OCI-LY7 (cell line): ENCODE measurements at regions of chr2 and their contacts with region 1.

Region 1: DNA sequence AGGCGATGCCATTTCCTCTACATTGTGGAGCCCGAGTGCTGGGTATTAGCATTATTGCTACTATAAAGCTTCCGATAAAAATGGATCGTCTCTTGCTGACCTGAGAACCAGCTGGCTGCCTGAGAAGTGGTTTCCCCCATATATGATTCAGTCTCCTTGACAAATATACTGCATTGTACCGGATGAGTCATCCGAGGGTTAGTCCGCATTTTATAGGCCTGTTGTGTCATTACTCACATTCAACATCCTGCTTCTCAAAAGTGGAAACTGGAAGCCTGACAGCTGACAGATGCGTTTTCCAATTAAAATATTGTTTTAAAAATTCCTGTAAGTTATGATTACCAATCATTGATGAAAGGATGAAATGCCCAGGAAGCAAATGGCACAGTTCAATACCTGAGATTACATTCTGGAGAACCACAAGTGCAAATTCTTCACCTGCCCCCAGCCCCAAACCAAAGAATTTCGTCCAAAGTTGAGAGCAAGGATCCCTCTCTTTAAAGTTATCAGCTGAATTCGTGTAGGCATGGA is 65.7 kb downstream of the SPRED2 start:
- DNase-seq: peak; percentile 71
- H3K4me3 ChIP-seq: peak overlapping the region; percentile 68
- H3K27ac ChIP-seq: peak overlapping the region; percentile 85
- H3K4me1 ChIP-seq: peaks cover 95% of the 10 kb centered on the region
- CTCF ChIP-seq: no peak

Region 2: DNA sequence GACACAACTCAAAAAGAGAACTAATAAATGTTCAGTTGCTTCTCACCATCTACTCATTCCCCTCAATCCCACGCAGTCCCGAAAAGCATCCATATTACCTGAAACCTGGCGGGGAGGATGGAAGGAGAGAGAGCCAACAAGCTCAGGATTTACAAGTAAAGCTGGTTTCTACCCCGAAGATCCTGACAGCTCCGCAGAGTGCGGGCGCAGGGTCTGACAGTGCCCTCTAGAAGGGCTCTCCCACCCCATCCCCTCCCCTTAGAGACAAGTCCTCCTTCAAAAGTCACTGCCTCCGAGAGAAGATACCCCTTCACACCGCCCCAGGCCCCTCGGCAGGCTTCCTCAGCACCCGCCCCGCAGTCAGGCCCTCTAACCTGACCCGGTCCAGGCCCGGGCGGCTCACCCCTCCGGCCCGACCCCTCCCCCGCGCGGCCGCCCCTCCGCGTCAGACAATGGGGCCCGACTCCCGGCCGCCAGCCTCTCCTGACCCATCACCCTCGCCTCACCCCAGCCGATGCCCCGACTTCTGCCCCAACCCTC is 237.3 kb before region 1 on chr2:
- CTCF ChIA-PET with region 1: no interaction called
- POLR2A ChIA-PET with region 1: no interaction called
- intact Hi-C with region 1: no loop called
- DNase-seq: peak; percentile 40
- H3K4me3 ChIP-seq: peak overlapping the region; percentile 93
- H3K27ac ChIP-seq: peak overlapping the region; percentile 58
- H3K4me1 ChIP-seq: peaks cover 28% of the 10 kb centered on the region
- CTCF ChIP-seq: no peak; the same call in 1 of the 2 replicates

Region 3: GRCh38 chr2:65350684-65351083 is 16.0 kb before region 1 on chr2:
- CTCF ChIA-PET with region 1: interaction called, 3 read pairs
- POLR2A ChIA-PET with region 1: interaction called, 17 read pairs
- intact Hi-C with region 1: no loop called
- DNase-seq: peak; percentile 83
- H3K4me3 ChIP-seq: peak overlapping the region; percentile 46
- H3K27ac ChIP-seq: peak overlapping the region; percentile 81
- H3K4me1 ChIP-seq: peaks cover 70% of the 10 kb centered on the region
- CTCF ChIP-seq: peak; percentile 74

Region 4: DNA sequence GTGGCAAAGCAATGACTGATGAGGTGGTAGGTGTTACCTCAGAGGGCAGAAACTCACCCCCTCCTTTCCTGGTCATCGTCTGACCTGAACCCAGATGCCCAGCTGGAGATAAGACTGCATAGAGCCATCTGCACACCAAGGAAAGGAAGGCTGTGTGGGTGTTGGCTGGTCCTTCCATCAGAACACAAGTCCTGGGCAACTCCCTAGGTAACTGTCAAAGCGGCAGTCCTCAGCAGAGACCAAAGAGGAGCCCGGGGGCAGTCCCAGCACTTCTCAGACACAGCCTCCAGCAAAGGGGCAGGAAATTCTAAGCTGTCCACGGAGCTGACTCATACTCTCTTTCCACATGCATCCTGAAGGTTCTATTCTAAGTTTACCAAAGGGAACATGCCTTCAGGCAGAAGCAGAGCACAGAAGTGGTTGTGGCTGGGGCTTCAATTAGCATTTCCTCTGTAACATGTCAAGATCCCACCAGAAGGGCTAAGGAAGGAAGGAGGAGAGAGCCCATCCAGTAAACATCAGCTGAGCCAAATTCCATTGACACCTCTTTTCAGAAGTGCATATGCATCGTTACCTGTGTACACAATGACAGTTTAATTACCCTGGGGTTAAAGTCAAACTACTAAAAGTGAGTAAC is 11.0 kb after region 1 on chr2:
- CTCF ChIA-PET with region 1: interaction called, 12 read pairs
- POLR2A ChIA-PET with region 1: interaction called, 64 read pairs
- intact Hi-C with region 1: no loop called
- DNase-seq: no peak
- H3K4me3 ChIP-seq: no peak overlapping the region
- H3K27ac ChIP-seq: no peak overlapping the region
- H3K4me1 ChIP-seq: peaks cover 74% of the 10 kb centered on the region
- CTCF ChIP-seq: no peak

Region 5: GRCh38 chr2:65382776-65383357 is 16.2 kb after region 1 on chr2:
- CTCF ChIA-PET with region 1: interaction called, 12 read pairs
- POLR2A ChIA-PET with region 1: interaction called, 104 read pairs
- intact Hi-C with region 1: no loop called
- DNase-seq: peak; percentile 85
- H3K4me3 ChIP-seq: peak overlapping the region; percentile 51
- H3K27ac ChIP-seq: peak overlapping the region; percentile 89
- H3K4me1 ChIP-seq: peaks cover 87% of the 10 kb centered on the region
- CTCF ChIP-seq: peak; percentile 82

Region 6: GRCh38 chr2:65390134-65390533 is 23.5 kb after region 1 on chr2:
- CTCF ChIA-PET with region 1: interaction called, 4 read pairs
- POLR2A ChIA-PET with region 1: interaction called, 104 read pairs
- intact Hi-C with region 1: no loop called
- DNase-seq: peak; percentile 89
- H3K4me3 ChIP-seq: peak overlapping the region; percentile 60
- H3K27ac ChIP-seq: peak overlapping the region; percentile 96
- H3K4me1 ChIP-seq: peaks cover 99% of the 10 kb centered on the region
- CTCF ChIP-seq: no peak